ENCODE measurements at regions of chr7 and their contacts with region 1.

Region 1: DNA sequence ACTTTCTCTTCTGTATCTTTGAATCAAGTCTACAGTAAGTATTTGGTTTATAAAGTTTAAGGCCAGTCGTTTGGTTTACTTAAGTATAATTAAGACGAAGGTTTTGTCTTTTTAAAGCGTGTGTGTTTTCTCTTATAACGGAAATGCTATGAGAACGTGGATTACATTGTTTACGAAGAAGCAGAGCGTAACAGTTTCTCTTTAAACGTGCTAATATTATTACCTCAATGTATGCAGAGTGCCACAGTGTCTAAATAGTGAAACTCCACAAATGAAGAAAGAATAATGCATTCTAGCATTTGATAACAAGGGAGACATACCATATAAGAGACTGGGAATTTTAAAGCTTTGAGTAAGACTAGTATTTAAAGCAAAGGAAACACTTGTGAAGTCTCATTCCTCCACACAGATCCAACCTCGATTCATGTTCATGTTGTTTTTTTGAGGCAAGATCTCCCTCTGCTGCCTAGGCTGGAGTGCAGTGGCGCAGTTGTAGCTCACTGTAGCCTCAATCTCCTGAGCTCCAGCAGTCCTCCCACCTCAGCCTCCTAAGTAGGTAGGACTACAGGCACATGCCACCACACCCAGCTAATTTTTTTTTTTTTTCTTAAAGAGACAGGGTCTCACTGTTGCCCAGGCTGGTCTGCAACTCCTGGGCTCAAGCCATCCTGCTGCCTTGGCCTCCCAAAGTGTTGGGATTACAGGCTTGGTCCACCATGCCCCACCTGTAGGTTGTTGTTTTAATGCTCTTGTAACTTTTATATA is 75.1 kb downstream of the ANKRD61 start:
- DNase-seq: peak in 8 of 10 donors; percentile 15 to 51 (median 29)
- ATAC-seq: no peak
- H3K4me3 Mint-ChIP-seq: peak overlapping the region; percentile 83 to 95 (median 92)
- H3K27ac Mint-ChIP-seq: peak overlapping the region; percentile 86 to 97 (median 94)
- H3K4me1 Mint-ChIP-seq: peaks cover 16 to 48% (median 39%) of the 10 kb centered on the region in 4 donors
- H3K27me3 Mint-ChIP-seq: no peaks in the 10 kb centered on the region

Region 2: GRCh38 chr7:6160191-6160623 is 53.9 kb after region 1 on chr7:
- POLR2A ChIA-PET with region 1: no interaction called
- DNase-seq: no peak
- ATAC-seq: no peak
- H3K4me3 Mint-ChIP-seq: no peak overlapping the region
- H3K27ac Mint-ChIP-seq: no peak overlapping the region
- H3K4me1 Mint-ChIP-seq: peaks cover 0 to 2% (median 0%) of the 10 kb centered on the region in 4 donors
- H3K27me3 Mint-ChIP-seq: no peaks in the 10 kb centered on the region

Region 3: GRCh38 chr7:6350433-6351058 is 244.2 kb after region 1 on chr7:
- POLR2A ChIA-PET with region 1: interaction called, 10 read pairs
- DNase-seq: no peak
- ATAC-seq: no peak
- H3K4me3 Mint-ChIP-seq: peak overlapping the region in 1 of 10 donors; percentile 1
- H3K27ac Mint-ChIP-seq: peak overlapping the region in 2 of 10 donors; percentile 29 to 51
- H3K4me1 Mint-ChIP-seq: peaks cover 0 to 24% (median 14%) of the 10 kb centered on the region in 4 donors
- H3K27me3 Mint-ChIP-seq: peaks cover 0 to 5% (median 3%) of the 10 kb centered on the region in 5 donors

Measured in naive thymus-derived CD8-positive, alpha-beta T cell (primary cell).